MCF 10A (cell line): ENCODE measurements at regions of chr5 and their contacts with region 1.

Region 1: DNA sequence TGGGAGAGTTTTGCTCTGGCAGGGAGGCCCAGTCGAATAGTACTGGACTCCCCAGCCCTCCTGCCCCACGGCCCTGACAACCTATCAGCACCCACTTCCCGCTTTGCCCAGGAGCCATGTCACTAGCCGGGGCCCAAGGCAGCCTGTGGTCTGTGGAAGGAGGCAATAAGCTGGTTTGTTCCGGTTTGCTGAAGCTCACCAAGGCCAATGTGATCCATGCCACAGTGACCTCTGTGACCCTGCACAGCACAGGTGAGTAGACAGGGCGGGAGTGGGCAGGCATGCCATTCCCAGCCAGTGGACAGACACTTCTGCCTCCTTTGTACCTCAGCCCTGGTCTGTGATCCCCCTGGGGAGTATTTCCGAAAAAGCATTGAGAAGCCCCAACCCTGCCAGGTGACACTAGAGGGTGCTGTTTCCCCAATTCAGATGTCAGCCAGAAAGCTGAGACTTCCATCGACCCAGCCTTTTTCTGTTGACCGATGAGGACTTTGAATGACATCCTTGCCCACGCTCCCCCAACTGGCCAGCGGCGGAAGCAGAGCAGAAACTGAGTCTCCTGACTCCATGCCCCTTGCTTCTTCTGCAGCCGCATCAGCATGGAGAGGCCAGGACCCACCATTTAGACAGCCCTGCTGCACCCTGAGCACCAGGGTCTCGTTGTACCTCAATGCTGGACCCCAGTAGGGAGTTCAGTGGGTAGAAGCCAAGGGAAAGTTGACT is 9.6 kb downstream of the PCYOX1L start:
- DNase-seq: peak; percentile 87
- H3K4me3 Mint-ChIP-seq: no peak overlapping the region
- H3K27ac Mint-ChIP-seq: no peak overlapping the region
- H3K4me1 Mint-ChIP-seq: peaks cover 8% of the 10 kb centered on the region
- H3K27me3 Mint-ChIP-seq: no peaks in the 10 kb centered on the region
- CTCF ChIP-seq: peak; percentile 85

Region 2: GRCh38 chr5:149298842-149299404 is 68.5 kb before region 1 on chr5:
- CTCF ChIA-PET with region 1: interaction called, 1,231 read pairs
- POLR2A ChIA-PET with region 1: interaction called, 4 read pairs
- intact Hi-C with region 1: no loop called
- DNase-seq: no peak
- H3K4me3 Mint-ChIP-seq: no peak overlapping the region
- H3K27ac Mint-ChIP-seq: no peak overlapping the region
- H3K4me1 Mint-ChIP-seq: peaks cover 9% of the 10 kb centered on the region
- H3K27me3 Mint-ChIP-seq: no peaks in the 10 kb centered on the region
- CTCF ChIP-seq: no peak

Region 3: GRCh38 chr5:149381987-149382340 is 14.6 kb after region 1 on chr5:
- CTCF ChIA-PET with region 1: interaction called, 105 read pairs
- POLR2A ChIA-PET with region 1: interaction called, 4 read pairs
- intact Hi-C with region 1: no loop called
- DNase-seq: peak; percentile 78
- H3K4me3 Mint-ChIP-seq: no peak overlapping the region
- H3K27ac Mint-ChIP-seq: no peak overlapping the region
- H3K4me1 Mint-ChIP-seq: no peaks in the 10 kb centered on the region
- H3K27me3 Mint-ChIP-seq: no peaks in the 10 kb centered on the region
- CTCF ChIP-seq: peak; percentile 97

Region 4: DNA sequence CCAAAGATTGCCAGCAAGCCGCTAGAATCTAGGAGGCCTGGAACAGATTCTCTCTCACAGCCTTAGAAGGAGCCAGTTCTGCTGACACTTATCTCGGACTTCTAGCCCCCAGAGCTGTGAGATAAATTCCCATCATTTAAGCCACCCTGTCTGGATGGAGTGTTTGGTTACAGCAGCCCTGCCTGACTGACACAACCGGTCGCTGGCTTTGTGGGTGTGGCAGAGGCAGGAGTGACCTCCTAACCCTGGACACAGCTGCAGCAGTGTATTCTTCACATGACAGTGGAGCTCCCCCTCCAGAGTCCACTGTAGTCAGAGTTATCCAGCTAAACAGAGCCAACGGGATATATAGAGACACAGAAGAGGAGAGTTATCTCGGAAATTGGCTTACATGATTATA is 32.9 kb after region 1 on chr5:
- CTCF ChIA-PET with region 1: interaction called, 10 read pairs
- POLR2A ChIA-PET with region 1: no interaction called
- intact Hi-C with region 1: no loop called
- DNase-seq: no peak
- H3K4me3 Mint-ChIP-seq: no peak overlapping the region
- H3K27ac Mint-ChIP-seq: no peak overlapping the region
- H3K4me1 Mint-ChIP-seq: no peaks in the 10 kb centered on the region
- H3K27me3 Mint-ChIP-seq: no peaks in the 10 kb centered on the region
- CTCF ChIP-seq: no peak

Region 5: DNA sequence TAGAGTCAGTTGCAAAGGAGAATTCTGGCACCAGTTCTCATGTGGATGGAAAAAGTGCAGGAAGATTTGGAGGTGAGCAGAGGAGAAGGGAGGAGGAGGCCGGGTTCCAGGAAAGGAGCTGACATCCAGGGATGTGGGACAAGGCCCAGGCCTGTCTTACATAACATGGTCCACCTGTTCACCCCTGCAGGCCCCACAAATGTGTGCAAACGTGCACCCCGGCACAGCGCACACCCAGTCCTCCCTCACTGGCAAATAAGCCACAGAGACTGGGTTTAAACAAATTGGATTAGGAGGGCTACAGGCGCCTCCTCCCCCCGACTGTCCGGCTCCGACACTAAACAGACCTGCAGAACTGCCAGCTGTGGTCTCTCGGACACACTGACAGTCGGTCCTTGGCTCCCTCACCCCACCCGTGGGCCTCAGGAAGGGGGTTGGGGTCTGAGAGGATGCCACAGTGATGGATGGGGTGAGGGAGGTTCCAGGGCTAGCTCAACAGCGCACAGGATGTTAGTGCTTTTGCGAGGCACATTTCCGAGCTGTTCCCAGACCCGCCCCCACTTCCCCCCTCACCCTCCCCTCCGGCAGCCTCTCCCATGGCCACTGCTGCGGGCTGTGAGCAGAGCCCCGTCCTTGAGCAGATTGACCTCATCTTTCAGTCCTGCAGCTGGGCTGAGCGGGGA is 55.1 kb after region 1 on chr5:
- CTCF ChIA-PET with region 1: interaction called, 87 read pairs
- POLR2A ChIA-PET with region 1: no interaction called
- intact Hi-C with region 1: no loop called
- DNase-seq: no peak
- H3K4me3 Mint-ChIP-seq: no peak overlapping the region
- H3K27ac Mint-ChIP-seq: no peak overlapping the region
- H3K4me1 Mint-ChIP-seq: no peaks in the 10 kb centered on the region
- H3K27me3 Mint-ChIP-seq: peaks cover 16% of the 10 kb centered on the region
- CTCF ChIP-seq: no peak

Region 6: DNA sequence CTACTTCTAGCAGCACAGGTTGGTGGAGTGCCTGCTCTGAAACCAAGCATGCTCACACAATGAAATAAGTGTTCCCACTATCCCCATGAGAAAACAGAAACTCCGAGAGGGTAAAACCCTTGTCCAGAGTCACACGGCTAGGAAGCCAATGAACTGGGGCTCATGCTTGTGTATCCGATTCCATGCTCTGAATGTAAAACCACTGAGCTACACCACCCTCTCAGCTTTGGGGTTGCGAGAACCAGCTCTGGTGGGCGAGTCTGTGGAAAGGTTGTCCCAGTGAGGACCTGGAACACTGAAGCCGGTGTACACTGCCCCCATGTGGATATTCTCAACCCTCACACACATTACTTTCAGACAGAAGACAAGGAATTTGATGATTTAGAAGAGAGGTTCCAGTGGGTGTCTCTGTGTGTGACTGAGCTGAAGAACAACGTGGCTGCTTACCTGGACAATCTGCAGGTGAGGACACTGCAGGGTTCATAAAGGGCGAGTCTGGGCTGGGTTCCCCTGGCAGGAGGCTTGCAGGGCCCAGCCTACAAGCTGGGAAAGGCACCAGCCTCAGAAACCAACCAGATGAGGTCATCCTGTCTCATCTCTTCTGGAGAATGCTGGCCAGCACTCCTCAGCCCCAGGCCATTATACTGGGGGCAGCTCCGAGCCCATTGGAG is 251.3 kb after region 1 on chr5:
- CTCF ChIA-PET with region 1: interaction called, 8 read pairs
- POLR2A ChIA-PET with region 1: interaction called, 4 read pairs
- intact Hi-C with region 1: loop called (anchors 5 kb)
- DNase-seq: peak; percentile 86
- H3K4me3 Mint-ChIP-seq: no peak overlapping the region
- H3K27ac Mint-ChIP-seq: peak overlapping the region; percentile 28
- H3K4me1 Mint-ChIP-seq: peaks cover 16% of the 10 kb centered on the region
- H3K27me3 Mint-ChIP-seq: no peaks in the 10 kb centered on the region
- CTCF ChIP-seq: peak; percentile 92